ENCODE measurements at regions of chr13 and their contacts with region 1.

Region 1: DNA sequence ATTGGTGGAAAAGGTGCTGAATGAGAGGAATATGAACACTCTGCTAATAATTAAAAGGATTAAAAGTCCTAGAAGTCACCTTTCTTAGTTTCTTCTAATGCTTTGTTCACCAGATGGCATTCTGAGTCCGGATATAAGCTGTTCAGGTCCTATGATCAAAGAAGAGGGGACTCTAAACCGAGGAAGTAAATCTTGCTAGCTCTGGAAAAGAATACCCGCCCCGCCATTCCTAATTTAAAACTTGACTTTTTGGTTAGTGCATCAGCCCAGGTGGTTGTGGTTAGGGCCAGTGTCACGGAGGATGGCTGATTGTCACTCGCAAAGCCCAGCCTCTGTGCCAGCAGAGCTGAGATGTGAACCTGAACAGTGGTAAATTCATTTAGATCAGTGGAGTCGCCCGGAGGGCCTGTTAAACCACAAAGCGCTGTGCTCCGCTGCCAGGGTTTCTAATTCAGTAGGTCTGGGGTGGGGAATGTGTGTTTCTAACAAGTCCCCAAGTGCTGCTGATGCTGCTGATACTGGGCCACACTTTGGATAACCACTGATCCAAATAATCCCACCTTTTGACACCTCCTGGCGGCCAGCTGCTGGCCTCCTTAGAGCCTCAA is 425.4 kb downstream of the DCT start:
- DNase-seq: no peak
- H3K4me3 ChIP-seq: no peak overlapping the region
- CTCF ChIP-seq: no peak

Region 2: DNA sequence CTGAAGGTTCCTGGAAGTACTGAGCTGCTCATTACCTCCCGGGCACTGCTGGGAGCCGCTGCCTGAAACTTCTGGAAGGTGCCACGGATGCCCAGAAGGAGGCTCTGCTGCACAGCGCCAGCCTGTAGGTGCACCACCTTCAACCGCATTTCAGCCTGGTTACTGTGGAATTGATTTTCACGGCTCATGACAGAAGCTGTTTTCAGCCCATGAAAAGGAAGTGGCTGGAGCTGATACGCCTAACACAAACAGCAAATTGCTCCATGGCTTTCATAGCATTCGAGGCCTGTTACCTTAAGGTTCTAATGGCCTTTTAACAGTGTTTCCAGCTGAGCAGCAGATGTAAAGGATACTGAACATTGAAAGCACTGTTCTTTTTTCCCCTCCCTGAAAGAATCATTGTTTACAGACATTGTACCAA is 805.5 kb before region 1 on chr13:
- in situ Hi-C with region 1: loop called (anchors 10 kb)
- DNase-seq: peak; percentile 88
- H3K4me3 ChIP-seq: no peak overlapping the region
- CTCF ChIP-seq: peak; percentile 76

Region 3: GRCh38 chr13:94170145-94170571 is 116.1 kb after region 1 on chr13:
- in situ Hi-C with region 1: no loop called
- DNase-seq: peak; percentile 47
- H3K4me3 ChIP-seq: no peak overlapping the region
- CTCF ChIP-seq: no peak

Measured in astrocyte of the spinal cord (primary cell).